ENCODE measurements at regions of chr2 and their contacts with region 1.

Region 1: GRCh38 chr2:6993229-6993640 is 76.0 kb downstream of the RNF144A start:
- DNase-seq: peak; percentile 73 to 80
- ATAC-seq: peak; percentile 68 to 86 (median 82)
- H3K4me3 ChIP-seq: no peak overlapping the region
- H3K27ac ChIP-seq: peak overlapping the region; percentile 28 to 82 (median 66)
- H3K4me1 ChIP-seq: peaks cover 0 to 46% (median 34%) of the 10 kb centered on the region in 9 donors
- H3K27me3 ChIP-seq: no peaks in the 10 kb centered on the region
- CTCF ChIP-seq: no peak

Region 2: DNA sequence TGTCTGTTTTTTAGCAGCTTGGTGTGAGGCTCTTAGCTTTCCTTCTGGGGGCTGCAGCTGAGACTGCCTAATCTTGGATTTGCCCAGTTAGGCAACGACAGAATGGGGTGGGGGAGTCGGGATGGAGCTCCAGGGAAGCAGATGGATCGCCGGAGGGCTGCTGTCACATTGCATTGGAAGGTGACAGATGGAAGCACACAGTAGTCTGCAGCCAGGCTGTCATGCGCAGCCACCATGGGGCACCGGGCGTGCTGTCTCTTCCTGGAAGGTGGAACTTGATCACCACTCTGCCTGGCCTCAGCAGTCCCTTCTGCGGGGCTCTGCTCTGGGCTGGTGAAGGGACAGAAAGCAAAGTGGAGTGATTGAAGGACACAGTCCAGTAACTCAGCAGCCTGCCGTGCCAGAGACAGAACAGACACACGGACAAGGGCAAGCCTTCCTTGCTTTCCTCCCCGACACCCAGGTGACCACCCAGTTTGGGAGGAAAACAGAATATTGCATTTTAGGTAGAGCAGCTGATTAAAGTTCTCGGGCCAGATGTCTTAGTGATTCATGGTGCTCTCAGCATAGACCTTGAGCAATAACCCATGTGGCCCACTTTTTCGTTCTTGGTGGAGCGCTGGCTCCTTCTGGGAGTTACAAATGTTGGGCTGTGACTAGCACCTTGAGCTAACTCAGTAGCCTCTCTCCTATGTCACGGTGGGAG is 35.2 kb before region 1 on chr2:
- intact Hi-C with region 1: loop called in 1 of 10 experiments (anchors 5 kb)
- DNase-seq: peak in 1 of 2 donors; percentile 35
- ATAC-seq: peak in 6 of 8 donors; percentile 23 to 65 (median 38)
- H3K4me3 ChIP-seq: no peak overlapping the region
- H3K27ac ChIP-seq: peak overlapping the region in 2 of 10 donors; percentile 19 to 42
- H3K4me1 ChIP-seq: peaks cover 5 to 70% (median 49%) of the 10 kb centered on the region in 9 donors
- H3K27me3 ChIP-seq: no peaks in the 10 kb centered on the region
- CTCF ChIP-seq: no peak